Activated B cell treated with CpG ODN at 0.5 μM for 24 hours (primary cell): ENCODE measurements at regions of chr7 and their contacts with region 1.

Region 1: GRCh38 chr7:101990811-101991418 is 173.5 kb downstream of the CUX1 start:
- DNase-seq: peak; percentile 57
- ATAC-seq: peak; percentile 86
- H3K4me3 Mint-ChIP-seq: peak overlapping the region; percentile 71
- H3K27ac Mint-ChIP-seq: peak overlapping the region; percentile 91
- H3K4me1 Mint-ChIP-seq: peaks cover 74% of the 10 kb centered on the region
- H3K27me3 Mint-ChIP-seq: no peaks in the 10 kb centered on the region
- CTCF ChIP-seq: no peak

Region 2: GRCh38 chr7:101856473-101857357 is 134.2 kb before region 1 on chr7:
- CTCF ChIA-PET with region 1: interaction called, 9 read pairs
- POLR2A ChIA-PET with region 1: interaction called, 7 read pairs
- intact Hi-C with region 1: loop called (anchors 1 kb)
- DNase-seq: peak; percentile 76
- ATAC-seq: peak; percentile 86
- H3K4me3 Mint-ChIP-seq: peak overlapping the region; percentile 92
- H3K27ac Mint-ChIP-seq: peak overlapping the region; percentile 98
- H3K4me1 Mint-ChIP-seq: peaks cover 74% of the 10 kb centered on the region
- H3K27me3 Mint-ChIP-seq: no peaks in the 10 kb centered on the region
- CTCF ChIP-seq: no peak

Region 3: DNA sequence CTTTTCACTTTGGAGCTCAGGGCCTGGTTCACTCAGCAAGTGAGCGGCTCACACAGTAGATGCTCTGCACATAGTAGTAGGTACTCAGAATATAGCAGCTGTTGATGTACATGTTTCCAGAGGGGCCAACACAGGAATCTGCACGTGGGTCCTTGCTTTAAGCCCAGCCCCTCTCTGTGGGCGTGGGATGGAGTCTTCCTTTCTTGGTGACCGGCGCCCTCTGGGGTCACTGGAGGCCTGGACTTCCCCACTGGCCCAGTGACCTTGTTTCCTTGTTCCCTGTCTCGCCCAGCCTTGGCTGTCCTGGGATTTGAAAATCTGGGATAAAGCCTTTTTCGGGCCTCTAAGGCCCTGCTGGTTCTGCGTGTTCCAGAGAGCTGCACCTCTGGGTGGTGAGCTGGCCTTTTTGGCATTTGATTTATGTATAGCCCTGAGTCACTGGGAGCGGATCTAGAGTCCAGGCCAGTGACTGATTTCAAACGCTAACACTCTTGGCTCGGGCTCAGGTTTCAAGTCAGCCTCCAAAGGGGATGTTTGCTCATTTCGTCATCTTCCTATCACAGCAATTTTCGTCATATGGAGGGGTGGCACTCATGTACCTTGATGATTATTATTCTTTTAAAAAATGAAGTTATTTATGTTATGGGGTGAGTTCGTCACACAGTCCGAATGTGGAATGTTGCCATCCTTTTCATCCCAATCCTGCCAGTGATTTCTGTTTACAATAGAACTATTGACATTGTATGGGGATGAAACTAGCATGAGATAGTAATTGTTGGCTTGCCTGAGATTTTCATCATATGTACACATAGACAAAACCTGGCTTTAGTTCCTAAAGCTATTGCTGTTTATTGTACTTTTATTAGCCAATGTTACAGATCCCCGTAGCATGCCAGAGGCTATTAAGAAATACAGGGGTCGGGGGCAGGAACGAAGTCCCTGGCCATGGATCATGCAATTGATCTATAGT is 108.0 kb before region 1 on chr7:
- CTCF ChIA-PET with region 1: no interaction called
- POLR2A ChIA-PET with region 1: no interaction called
- intact Hi-C with region 1: loop called (anchors 10 kb)
- DNase-seq: no peak
- ATAC-seq: no peak
- H3K4me3 Mint-ChIP-seq: no peak overlapping the region
- H3K27ac Mint-ChIP-seq: no peak overlapping the region
- H3K4me1 Mint-ChIP-seq: peaks cover 61% of the 10 kb centered on the region
- H3K27me3 Mint-ChIP-seq: no peaks in the 10 kb centered on the region
- CTCF ChIP-seq: no peak

Region 4: GRCh38 chr7:101900103-101900502 is 90.8 kb before region 1 on chr7:
- CTCF ChIA-PET with region 1: no interaction called
- POLR2A ChIA-PET with region 1: interaction called, 11 read pairs
- intact Hi-C with region 1: no loop called
- DNase-seq: no peak
- ATAC-seq: no peak
- H3K4me3 Mint-ChIP-seq: no peak overlapping the region
- H3K27ac Mint-ChIP-seq: no peak overlapping the region
- H3K4me1 Mint-ChIP-seq: peaks cover 13% of the 10 kb centered on the region
- H3K27me3 Mint-ChIP-seq: no peaks in the 10 kb centered on the region
- CTCF ChIP-seq: no peak

Region 5: GRCh38 chr7:101957744-101958525 is 33.0 kb before region 1 on chr7:
- CTCF ChIA-PET with region 1: no interaction called
- POLR2A ChIA-PET with region 1: interaction called, 11 read pairs
- intact Hi-C with region 1: loop called (anchors 2 kb)
- DNase-seq: no peak
- ATAC-seq: peak; percentile 43
- H3K4me3 Mint-ChIP-seq: no peak overlapping the region
- H3K27ac Mint-ChIP-seq: no peak overlapping the region
- H3K4me1 Mint-ChIP-seq: peaks cover 48% of the 10 kb centered on the region
- H3K27me3 Mint-ChIP-seq: no peaks in the 10 kb centered on the region
- CTCF ChIP-seq: no peak

Region 6: GRCh38 chr7:102061981-102062390 is 71.1 kb after region 1 on chr7:
- CTCF ChIA-PET with region 1: no interaction called
- POLR2A ChIA-PET with region 1: interaction called, 3 read pairs
- intact Hi-C with region 1: loop called (anchors 1 kb)
- DNase-seq: peak; percentile 57
- ATAC-seq: peak; percentile 94
- H3K4me3 Mint-ChIP-seq: peak overlapping the region; percentile 61
- H3K27ac Mint-ChIP-seq: peak overlapping the region; percentile 81
- H3K4me1 Mint-ChIP-seq: peaks cover 28% of the 10 kb centered on the region
- H3K27me3 Mint-ChIP-seq: no peaks in the 10 kb centered on the region
- CTCF ChIP-seq: no peak

Region 7: DNA sequence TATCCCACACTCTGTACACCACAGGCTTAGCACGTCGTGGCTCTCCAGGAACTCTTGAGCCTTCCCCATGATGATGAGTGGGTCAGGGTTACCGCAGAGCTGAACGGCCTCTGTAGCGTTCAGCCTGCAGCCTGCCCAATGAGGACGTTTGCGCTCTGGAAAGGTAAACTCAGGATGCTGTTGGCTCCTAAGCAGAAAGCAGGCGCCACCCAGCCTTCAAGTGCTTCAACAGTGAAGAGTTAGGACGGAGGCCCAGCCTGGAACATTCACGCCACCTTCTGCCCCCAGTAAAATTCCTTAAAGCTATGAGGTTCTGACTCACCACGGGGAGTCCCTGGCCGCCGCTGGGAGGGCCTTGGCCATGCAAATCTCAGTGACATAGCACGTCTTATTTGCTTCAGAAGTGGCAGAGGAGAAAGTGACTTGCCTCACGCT is 134.2 kb after region 1 on chr7:
- CTCF ChIA-PET with region 1: no interaction called
- POLR2A ChIA-PET with region 1: no interaction called
- intact Hi-C with region 1: loop called (anchors 10 kb)
- DNase-seq: peak; percentile 28
- ATAC-seq: peak; percentile 86
- H3K4me3 Mint-ChIP-seq: no peak overlapping the region
- H3K27ac Mint-ChIP-seq: peak overlapping the region; percentile 41
- H3K4me1 Mint-ChIP-seq: peaks cover 21% of the 10 kb centered on the region
- H3K27me3 Mint-ChIP-seq: no peaks in the 10 kb centered on the region
- CTCF ChIP-seq: no peak

Region 8: DNA sequence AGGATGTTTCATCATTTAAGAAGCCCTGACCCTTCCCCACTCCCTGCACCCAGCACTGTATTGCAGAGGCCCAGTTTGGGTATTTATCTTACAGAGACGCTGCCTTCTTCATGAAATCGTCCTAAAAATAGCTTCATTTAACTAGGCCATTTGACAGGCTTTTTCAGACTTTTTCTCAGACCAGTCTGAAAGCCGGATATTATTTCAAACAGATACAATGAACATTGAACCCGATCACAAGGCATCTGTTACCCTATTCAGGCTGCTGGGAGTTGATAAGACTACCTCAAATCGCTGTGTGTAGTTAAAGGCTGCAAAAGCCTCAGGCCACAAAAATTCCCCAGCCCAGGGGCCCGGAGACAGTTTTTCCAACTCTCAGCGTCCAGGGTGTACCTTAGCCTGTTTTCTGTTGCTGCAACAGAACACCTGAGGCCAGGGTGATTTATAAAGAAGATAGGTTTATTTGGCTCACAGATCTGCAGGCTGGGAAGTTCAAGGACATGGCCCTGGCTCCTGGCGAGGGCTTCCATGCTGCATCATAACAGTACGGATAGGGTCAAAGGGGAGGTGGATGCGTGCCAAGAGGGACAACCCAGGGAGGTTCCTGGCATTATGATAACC is 165.0 kb after region 1 on chr7:
- CTCF ChIA-PET with region 1: no interaction called
- POLR2A ChIA-PET with region 1: no interaction called
- intact Hi-C with region 1: no loop called
- DNase-seq: no peak
- ATAC-seq: no peak
- H3K4me3 Mint-ChIP-seq: no peak overlapping the region
- H3K27ac Mint-ChIP-seq: no peak overlapping the region
- H3K4me1 Mint-ChIP-seq: no peaks in the 10 kb centered on the region
- H3K27me3 Mint-ChIP-seq: no peaks in the 10 kb centered on the region
- CTCF ChIP-seq: no peak